ENCODE measurements at regions of chr19 and their contacts with region 1.

Region 1: GRCh38 chr19:53511933-53512374 is 26.0 kb upstream of the ZNF331 start:
- DNase-seq: peak in 1 of 2 donors; percentile 74
- H3K4me3 ChIP-seq: no peak overlapping the region
- H3K27ac ChIP-seq: no peak overlapping the region
- H3K4me1 ChIP-seq: no peaks in the 10 kb centered on the region
- H3K27me3 ChIP-seq: no peaks in the 10 kb centered on the region
- CTCF ChIP-seq: peak; percentile 28 to 60 (median 44)

Region 2: GRCh38 chr19:53340641-53341040 is 171.3 kb before region 1 on chr19:
- intact Hi-C with region 1: no loop called
- DNase-seq: no peak
- H3K4me3 ChIP-seq: no peak overlapping the region
- H3K27ac ChIP-seq: no peak overlapping the region
- H3K4me1 ChIP-seq: no peaks in the 10 kb centered on the region
- H3K27me3 ChIP-seq: no peaks in the 10 kb centered on the region
- CTCF ChIP-seq: no peak

Region 3: DNA sequence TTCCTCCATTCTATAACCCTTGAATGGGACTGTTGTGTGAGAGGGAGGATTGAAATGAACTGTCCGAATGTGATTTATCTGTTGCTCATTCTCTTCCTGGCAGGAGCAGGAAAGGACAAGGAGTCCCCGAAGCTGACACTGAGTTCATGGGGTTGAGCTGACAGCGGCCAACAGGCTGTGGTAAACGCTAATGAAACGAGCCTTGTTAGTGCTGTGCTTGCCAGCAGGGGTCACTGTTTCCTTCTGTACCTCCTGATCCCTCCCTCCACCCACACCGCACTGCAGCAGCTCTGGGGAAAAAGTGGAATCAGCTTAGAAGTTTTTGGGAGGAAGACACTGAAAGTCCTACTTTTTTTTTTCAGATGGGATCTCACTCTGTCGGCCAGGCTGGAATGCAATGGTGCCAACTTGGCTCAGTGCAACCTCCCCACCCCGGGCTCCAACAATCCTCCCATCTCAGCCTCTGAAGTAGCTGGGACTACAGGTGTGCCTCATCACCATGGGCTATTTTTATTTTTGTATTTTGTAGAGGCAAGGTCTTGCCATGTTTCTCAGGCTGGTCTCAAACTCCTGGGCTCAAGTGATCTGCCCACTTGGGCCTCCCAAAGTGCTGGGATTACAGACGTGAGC is 86.9 kb before region 1 on chr19:
- intact Hi-C with region 1: loop called (anchors 1 kb)
- DNase-seq: peak; percentile 16 to 80
- H3K4me3 ChIP-seq: no peak overlapping the region
- H3K27ac ChIP-seq: no peak overlapping the region
- H3K4me1 ChIP-seq: no peaks in the 10 kb centered on the region
- H3K27me3 ChIP-seq: no peaks in the 10 kb centered on the region
- CTCF ChIP-seq: peak; percentile 55 to 73 (median 69)

Measured in ascending aorta (tissue), 2 donors.